PC-3 (cell line): ENCODE measurements at regions of chr4 and their contacts with region 1.

Region 1: GRCh38 chr4:62881901-62882300 is 1527.3 kb downstream of the TECRL start:
- DNase-seq: peak; percentile 85
- ATAC-seq: peak; percentile 85
- H3K4me3 ChIP-seq: peak overlapping the region; percentile 33
- H3K27ac ChIP-seq: peak overlapping the region; percentile 95
- H3K4me1 ChIP-seq: peaks cover 28% of the 10 kb centered on the region
- H3K27me3 ChIP-seq: no peaks in the 10 kb centered on the region
- CTCF ChIP-seq: no peak

Region 2: DNA sequence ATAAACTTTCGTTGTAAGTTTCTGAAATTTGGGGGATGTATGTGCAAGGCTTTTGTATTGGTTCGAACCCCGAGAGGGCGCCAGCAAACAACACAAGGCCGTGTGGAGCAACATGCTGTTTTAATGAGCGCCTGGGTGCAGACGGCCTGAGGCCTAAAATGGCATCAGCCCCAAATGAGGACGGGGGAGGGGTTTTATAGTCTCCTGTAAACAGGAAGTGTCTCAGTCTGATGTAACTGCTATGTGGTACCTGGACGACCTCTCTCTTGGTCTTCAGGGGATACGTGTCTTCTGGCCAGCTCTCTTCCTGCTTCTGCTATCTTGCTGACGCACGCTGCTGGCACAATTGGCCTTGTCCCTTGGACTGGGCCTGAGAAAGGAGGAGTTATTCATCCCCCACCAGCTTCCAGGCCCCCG is 333.8 kb before region 1 on chr4:
- CTCF ChIA-PET with region 1: no interaction called
- POLR2A ChIA-PET with region 1: no interaction called
- intact Hi-C with region 1: loop called (anchors 5 kb)
- DNase-seq: peak; percentile 98
- ATAC-seq: peak; percentile 90
- H3K4me3 ChIP-seq: no peak overlapping the region
- H3K27ac ChIP-seq: peak overlapping the region; percentile 92
- H3K4me1 ChIP-seq: peaks cover 34% of the 10 kb centered on the region
- H3K27me3 ChIP-seq: no peaks in the 10 kb centered on the region
- CTCF ChIP-seq: peak; percentile 83

Region 3: GRCh38 chr4:62835631-62836030 is 46.3 kb before region 1 on chr4:
- CTCF ChIA-PET with region 1: no interaction called
- POLR2A ChIA-PET with region 1: no interaction called
- intact Hi-C with region 1: no loop called
- DNase-seq: no peak
- ATAC-seq: no peak
- H3K4me3 ChIP-seq: no peak overlapping the region
- H3K27ac ChIP-seq: no peak overlapping the region
- H3K4me1 ChIP-seq: no peaks in the 10 kb centered on the region
- H3K27me3 ChIP-seq: no peaks in the 10 kb centered on the region
- CTCF ChIP-seq: no peak

Region 4: DNA sequence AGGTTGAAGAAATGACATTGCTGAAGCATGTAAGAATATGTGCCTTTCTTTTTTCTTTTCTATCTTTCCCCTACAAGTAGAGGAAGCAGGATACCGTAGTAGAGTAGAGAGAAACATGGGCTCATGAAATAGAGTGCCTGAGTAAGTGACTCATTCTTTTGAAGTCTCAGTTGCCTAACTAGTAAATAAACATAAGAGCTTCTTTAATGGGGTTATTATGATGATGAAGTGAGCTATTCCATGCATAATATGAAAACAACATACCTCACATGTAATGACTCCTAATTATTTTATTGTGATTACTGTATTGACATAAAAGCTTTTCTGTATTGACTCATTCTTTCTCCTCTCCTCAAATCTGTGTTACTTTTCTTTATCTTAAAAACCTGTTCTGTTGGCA is 10.8 kb before region 1 on chr4:
- CTCF ChIA-PET with region 1: no interaction called
- POLR2A ChIA-PET with region 1: no interaction called
- intact Hi-C with region 1: loop called (anchors 1 kb)
- DNase-seq: peak; percentile 67
- ATAC-seq: peak; percentile 99
- H3K4me3 ChIP-seq: no peak overlapping the region
- H3K27ac ChIP-seq: no peak overlapping the region
- H3K4me1 ChIP-seq: no peaks in the 10 kb centered on the region
- H3K27me3 ChIP-seq: no peaks in the 10 kb centered on the region
- CTCF ChIP-seq: no peak

Region 5: GRCh38 chr4:63080934-63081333 is 199.0 kb after region 1 on chr4:
- CTCF ChIA-PET with region 1: no interaction called
- POLR2A ChIA-PET with region 1: no interaction called
- intact Hi-C with region 1: loop called (anchors 5 kb)
- DNase-seq: peak; percentile 55
- ATAC-seq: peak; percentile 58
- H3K4me3 ChIP-seq: no peak overlapping the region
- H3K27ac ChIP-seq: peak overlapping the region; percentile 40
- H3K4me1 ChIP-seq: peaks cover 6% of the 10 kb centered on the region; the same call in 1 of the 2 replicates
- H3K27me3 ChIP-seq: no peaks in the 10 kb centered on the region
- CTCF ChIP-seq: no peak

Region 6: DNA sequence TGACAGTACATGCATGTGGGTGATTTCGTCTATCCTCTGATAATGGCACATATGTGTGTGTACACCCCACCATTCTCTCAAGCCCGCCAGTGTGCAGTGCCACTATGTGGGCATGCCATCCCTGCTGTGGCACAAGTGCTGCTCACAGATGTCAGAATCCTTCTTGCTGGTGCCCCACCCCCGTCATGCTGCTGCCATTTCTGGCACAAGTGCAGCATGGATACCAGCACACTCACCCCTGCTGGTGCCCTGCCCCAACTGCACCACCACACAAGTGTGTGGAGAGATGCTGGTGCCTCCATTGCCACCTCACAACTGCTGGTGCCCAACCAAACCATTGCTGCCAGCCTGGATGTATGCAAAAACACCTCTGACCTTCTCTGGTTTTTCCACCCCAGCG is 393.6 kb after region 1 on chr4:
- CTCF ChIA-PET with region 1: no interaction called
- POLR2A ChIA-PET with region 1: no interaction called
- intact Hi-C with region 1: loop called (anchors 2 kb)
- DNase-seq: no peak
- ATAC-seq: no peak
- H3K4me3 ChIP-seq: no peak overlapping the region
- H3K27ac ChIP-seq: no peak overlapping the region
- H3K4me1 ChIP-seq: no peaks in the 10 kb centered on the region
- H3K27me3 ChIP-seq: no peaks in the 10 kb centered on the region
- CTCF ChIP-seq: no peak